Activated T-helper 1 cell treated with anti-CD3 and anti-CD28 coated beads, Interleukin-12 subunit alpha, Interleukin-12 subunit beta, Interleukin-2, Interleukin-4 antibody, amounts not matched to agents 30 ng/mL and 10 ng/mL and 1 ng/mL, durations not matched to agents 14 hours and 24 hours and 36 hours (primary cell): ENCODE measurements at regions of chr14 and their contacts with region 1.

Region 1: GRCh38 chr14:58427281-58428117 is at the starts of genes KIAA0586 and TIMM9:
- DNase-seq: peak; percentile 95
- H3K4me3 Mint-ChIP-seq: peak within 1 kb of the TSS; percentile 86
- H3K27ac Mint-ChIP-seq: peak within 1 kb of the TSS; percentile 96
- H3K4me1 Mint-ChIP-seq: peaks cover 49% of the 10 kb centered on the region
- H3K27me3 Mint-ChIP-seq: no peaks in the 10 kb centered on the region
- total RNA-seq, gene KIAA0586: 19.7 and 19.8 TPM in 2 replicates
- total RNA-seq, gene TIMM9: 66.5 and 67.4 TPM in 2 replicates

Region 2: GRCh38 chr14:57060276-57060955 is 1367.1 kb before region 1 on chr14:
- intact Hi-C with region 1: loop called (anchors 5 kb)
- DNase-seq: peak; percentile 9
- H3K4me3 Mint-ChIP-seq: peak overlapping the region; percentile 37
- H3K27ac Mint-ChIP-seq: peak overlapping the region; percentile 85
- H3K4me1 Mint-ChIP-seq: peaks cover 48% of the 10 kb centered on the region
- H3K27me3 Mint-ChIP-seq: peaks cover 15% of the 10 kb centered on the region

Region 3: DNA sequence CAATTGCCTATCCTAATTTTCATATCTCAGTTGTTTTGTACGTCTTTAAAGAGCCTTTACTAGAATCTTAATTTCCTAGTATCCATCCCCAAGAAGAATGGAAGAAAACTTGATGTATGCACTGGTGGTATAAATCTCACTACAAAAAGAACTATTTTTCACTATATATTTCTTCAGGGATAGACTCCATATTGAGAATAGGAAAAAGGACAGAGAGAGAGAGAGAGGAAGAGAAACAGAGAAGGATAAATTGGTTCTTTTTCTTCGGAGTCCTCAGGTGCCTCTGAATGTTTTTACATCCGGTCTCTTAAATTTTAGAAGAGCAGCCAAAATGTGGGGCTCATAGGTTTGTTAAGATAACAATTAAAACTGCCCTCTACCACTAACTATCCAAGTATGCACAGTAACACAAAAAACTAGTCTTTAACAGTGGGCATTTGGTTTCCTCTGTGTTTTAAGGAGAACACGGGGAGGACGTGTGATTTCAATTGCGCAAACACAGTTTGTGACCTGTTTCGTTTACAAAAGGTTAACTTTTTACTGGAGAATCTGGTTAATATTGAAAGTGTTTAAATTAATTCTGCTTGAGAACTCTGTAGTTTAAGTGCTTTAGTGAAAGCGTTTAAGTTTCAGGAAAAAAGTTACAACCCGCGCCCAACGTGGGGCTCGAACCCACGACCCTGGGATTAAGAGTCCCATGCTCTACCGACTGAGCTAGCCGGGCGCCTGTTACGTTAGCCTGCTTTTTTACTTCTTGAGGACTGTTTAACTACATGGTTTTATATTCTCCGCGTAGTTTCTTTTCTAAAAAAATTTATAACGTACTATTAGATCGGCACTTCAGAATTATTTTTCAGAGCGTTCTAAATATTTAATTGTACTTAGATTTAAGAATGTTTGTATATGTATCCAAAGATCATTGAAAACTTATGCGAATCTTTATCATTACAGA is 188.0 kb before region 1 on chr14:
- intact Hi-C with region 1: loop called (anchors 1 kb)
- DNase-seq: peak; percentile 68
- H3K4me3 Mint-ChIP-seq: no peak overlapping the region
- H3K27ac Mint-ChIP-seq: no peak overlapping the region
- H3K4me1 Mint-ChIP-seq: peaks cover 20% of the 10 kb centered on the region
- H3K27me3 Mint-ChIP-seq: no peaks in the 10 kb centered on the region

Region 4: DNA sequence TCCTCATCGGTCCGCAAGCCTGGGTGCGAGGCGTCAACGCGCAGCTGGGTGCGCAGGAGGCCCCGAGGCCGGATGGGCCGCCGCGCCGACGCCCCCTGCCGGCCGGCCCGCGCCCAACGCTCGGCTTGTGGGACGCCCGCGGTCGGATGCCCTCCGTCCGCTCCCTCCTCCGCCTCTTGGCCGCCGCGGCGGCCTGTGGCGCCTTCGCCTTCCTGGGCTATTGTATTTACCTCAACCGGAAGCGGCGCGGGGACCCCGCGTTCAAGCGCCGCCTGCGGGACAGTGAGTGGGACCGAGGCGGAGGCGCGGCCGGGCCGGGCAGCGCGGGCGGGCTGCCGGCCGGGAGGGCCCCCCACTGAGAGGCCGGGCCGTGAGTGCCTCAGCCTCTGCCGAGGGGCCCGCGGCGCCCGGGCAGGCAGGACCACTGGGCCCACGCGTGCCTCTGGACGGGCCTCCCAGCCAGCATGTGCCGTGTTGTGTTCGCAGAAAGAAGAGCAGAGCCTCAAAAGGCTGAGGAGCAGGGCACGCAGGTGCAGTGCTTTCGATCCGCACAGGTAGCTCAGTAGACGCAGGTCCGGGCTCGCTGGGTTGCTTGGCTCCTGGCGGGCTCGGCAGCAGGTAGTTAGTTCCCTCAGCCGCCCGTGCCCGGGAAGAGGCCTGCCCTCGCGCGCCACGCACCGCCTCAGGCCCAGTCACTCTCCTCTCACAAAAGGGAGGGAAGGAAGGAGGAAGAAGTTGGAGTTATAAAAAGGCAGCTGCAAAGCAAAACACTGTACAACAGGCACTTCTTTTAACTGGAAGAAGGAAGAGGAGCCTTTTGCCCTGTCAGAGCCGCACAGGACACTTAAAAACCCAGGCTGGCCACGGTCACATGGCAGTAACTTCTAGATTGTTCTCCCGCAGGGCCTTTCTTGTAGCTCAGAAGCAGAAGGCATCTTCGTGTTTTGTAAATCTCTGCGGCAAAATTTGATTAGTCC is 31.4 kb before region 1 on chr14 and contains the start of gene TOMM20L:
- intact Hi-C with region 1: loop called (anchors 1 kb)
- DNase-seq: peak; percentile 66
- H3K4me3 Mint-ChIP-seq: peak within 1 kb of the TSS; percentile 67
- H3K27ac Mint-ChIP-seq: peak within 1 kb of the TSS; percentile 7
- H3K4me1 Mint-ChIP-seq: peaks cover 13% of the 10 kb centered on the region
- H3K27me3 Mint-ChIP-seq: peaks cover 6% of the 10 kb centered on the region
- total RNA-seq, gene TOMM20L: not detected in 2 replicates

Region 5: GRCh38 chr14:58455587-58456228 is 28.2 kb after region 1 on chr14:
- intact Hi-C with region 1: no loop called
- DNase-seq: no peak
- H3K4me3 Mint-ChIP-seq: no peak overlapping the region
- H3K27ac Mint-ChIP-seq: no peak overlapping the region
- H3K4me1 Mint-ChIP-seq: peaks cover 7% of the 10 kb centered on the region
- H3K27me3 Mint-ChIP-seq: no peaks in the 10 kb centered on the region

Region 6: GRCh38 chr14:58829594-58829993 is 402.1 kb after region 1 on chr14:
- intact Hi-C with region 1: no loop called
- DNase-seq: no peak
- H3K4me3 Mint-ChIP-seq: no peak overlapping the region
- H3K27ac Mint-ChIP-seq: no peak overlapping the region
- H3K4me1 Mint-ChIP-seq: peaks cover 6% of the 10 kb centered on the region
- H3K27me3 Mint-ChIP-seq: peaks cover 5% of the 10 kb centered on the region

Region 7: GRCh38 chr14:59189786-59190771 is 762.6 kb after region 1 on chr14:
- intact Hi-C with region 1: loop called (anchors 1 kb)
- DNase-seq: peak; percentile 73
- H3K4me3 Mint-ChIP-seq: peak overlapping the region; percentile 96
- H3K27ac Mint-ChIP-seq: peak overlapping the region; percentile 87
- H3K4me1 Mint-ChIP-seq: peaks cover 11% of the 10 kb centered on the region
- H3K27me3 Mint-ChIP-seq: peaks cover 17% of the 10 kb centered on the region